AG04450 (cell line): ENCODE measurements at regions of chr1 and their contacts with region 1.

Region 1: GRCh38 chr1:240455228-240455821 is 156.6 kb downstream of the GREM2 start:
- DNase-seq: no peak
- H3K4me3 ChIP-seq: no peak overlapping the region
- H3K27ac ChIP-seq: no peak overlapping the region
- H3K27me3 ChIP-seq: no peaks in the 10 kb centered on the region
- CTCF ChIP-seq: peak; percentile 59

Region 2: GRCh38 chr1:240465531-240465940 is 10.2 kb after region 1 on chr1:
- CTCF ChIA-PET with region 1: interaction called, 13 read pairs
- POLR2A ChIA-PET with region 1: no interaction called
- DNase-seq: peak; percentile 10
- H3K4me3 ChIP-seq: peak overlapping the region; percentile 48
- H3K27ac ChIP-seq: peak overlapping the region; percentile 47
- H3K27me3 ChIP-seq: no peaks in the 10 kb centered on the region
- CTCF ChIP-seq: no peak

Region 3: DNA sequence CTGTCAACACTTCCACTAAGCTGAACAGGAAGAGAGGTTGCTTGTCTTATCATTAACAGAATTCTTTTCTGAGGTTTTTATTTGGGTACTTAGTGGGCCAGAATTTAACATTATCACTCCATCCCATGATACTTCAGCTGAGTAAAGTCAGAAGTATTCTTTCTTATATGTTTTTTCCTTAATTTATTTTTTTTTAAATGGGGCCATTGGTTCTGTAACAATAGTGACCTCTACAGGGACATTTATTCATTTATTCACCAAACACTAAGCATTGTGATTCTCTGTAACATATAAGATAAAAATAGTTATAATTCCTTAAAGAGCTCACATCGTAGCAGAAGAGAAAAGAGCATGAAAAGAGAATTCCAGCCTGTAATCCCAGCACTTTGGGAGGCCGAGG is 146.9 kb after region 1 on chr1:
- CTCF ChIA-PET with region 1: interaction called, 19 read pairs
- POLR2A ChIA-PET with region 1: no interaction called
- DNase-seq: no peak
- H3K4me3 ChIP-seq: no peak overlapping the region
- H3K27ac ChIP-seq: no peak overlapping the region
- H3K27me3 ChIP-seq: no peaks in the 10 kb centered on the region
- CTCF ChIP-seq: peak; percentile 28